CD8-positive, alpha-beta T cell (primary cell): ENCODE measurements at regions of chr12 and their contacts with region 1.

Region 1: GRCh38 chr12:85130632-85131031 is 94.5 kb downstream of the LRRIQ1 start:
- DNase-seq: no peak
- ATAC-seq: no peak
- H3K4me3 ChIP-seq: no peak overlapping the region
- H3K4me3 Mint-ChIP-seq: no peak overlapping the region
- H3K27ac ChIP-seq: no peak overlapping the region
- H3K27ac Mint-ChIP-seq: no peak overlapping the region
- H3K4me1 ChIP-seq: no peaks in the 10 kb centered on the region
- H3K4me1 Mint-ChIP-seq: no peaks in the 10 kb centered on the region
- H3K27me3 ChIP-seq: no peaks in the 10 kb centered on the region
- H3K27me3 Mint-ChIP-seq: no peaks in the 10 kb centered on the region
- CTCF ChIP-seq: no peak

Region 2: DNA sequence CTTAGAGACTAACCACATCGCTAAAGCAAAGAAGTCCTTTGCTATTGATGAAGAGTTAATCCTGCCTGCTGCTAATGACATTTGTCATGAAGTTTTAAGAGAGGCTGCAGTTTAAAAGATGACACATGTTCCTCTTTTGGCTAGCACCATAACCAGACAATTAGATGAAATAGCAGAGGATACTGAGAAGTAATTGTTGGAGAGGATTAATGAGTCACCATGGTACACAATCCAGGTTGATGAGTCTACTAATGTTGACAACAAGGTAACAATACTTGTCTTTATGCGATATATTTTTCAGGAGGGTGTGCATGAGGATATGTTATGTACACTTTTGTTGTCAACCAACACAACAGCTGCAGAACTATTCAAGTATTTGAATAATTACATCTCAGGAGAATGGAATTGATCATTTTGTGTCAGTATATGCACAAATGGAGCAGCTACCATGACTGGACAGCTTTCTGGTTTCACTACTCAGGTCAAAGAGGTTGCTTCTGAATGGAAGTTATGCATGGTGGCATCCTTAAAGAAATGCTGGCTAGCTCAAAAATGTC is 37.7 kb before region 1 on chr12:
- CTCF ChIA-PET with region 1: no interaction called
- POLR2A ChIA-PET with region 1: no interaction called
- intact Hi-C with region 1: loop called in 1 of 2 experiments (anchors 1 kb)
- DNase-seq: no peak
- ATAC-seq: no peak
- H3K4me3 ChIP-seq: no peak overlapping the region
- H3K4me3 Mint-ChIP-seq: no peak overlapping the region
- H3K27ac ChIP-seq: no peak overlapping the region
- H3K27ac Mint-ChIP-seq: no peak overlapping the region
- H3K4me1 ChIP-seq: no peaks in the 10 kb centered on the region
- H3K4me1 Mint-ChIP-seq: no peaks in the 10 kb centered on the region
- H3K27me3 ChIP-seq: no peaks in the 10 kb centered on the region
- H3K27me3 Mint-ChIP-seq: no peaks in the 10 kb centered on the region
- CTCF ChIP-seq: no peak

Region 3: DNA sequence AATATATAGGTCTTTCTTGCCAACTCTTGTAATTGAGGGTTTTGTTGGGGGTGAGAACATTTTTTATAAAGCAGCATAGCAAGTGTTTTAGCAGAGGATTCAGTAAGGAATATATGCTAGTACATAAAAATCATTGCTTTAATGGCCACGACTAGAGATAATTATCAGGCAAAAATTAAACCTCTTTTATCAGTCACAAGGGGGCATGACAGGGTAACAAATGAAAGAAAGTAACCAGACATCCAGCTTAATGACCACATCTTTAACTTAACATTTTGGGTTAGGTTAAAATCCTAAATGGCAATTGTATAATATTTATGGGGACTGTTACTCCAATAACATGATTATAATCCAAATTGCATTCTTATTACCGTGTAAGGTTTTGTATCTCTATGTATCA is 25.2 kb after region 1 on chr12:
- CTCF ChIA-PET with region 1: no interaction called
- POLR2A ChIA-PET with region 1: no interaction called
- intact Hi-C with region 1: no loop called
- DNase-seq: no peak
- ATAC-seq: no peak
- H3K4me3 ChIP-seq: no peak overlapping the region
- H3K4me3 Mint-ChIP-seq: no peak overlapping the region
- H3K27ac ChIP-seq: no peak overlapping the region
- H3K27ac Mint-ChIP-seq: no peak overlapping the region
- H3K4me1 ChIP-seq: no peaks in the 10 kb centered on the region
- H3K4me1 Mint-ChIP-seq: no peaks in the 10 kb centered on the region
- H3K27me3 ChIP-seq: no peaks in the 10 kb centered on the region
- H3K27me3 Mint-ChIP-seq: no peaks in the 10 kb centered on the region
- CTCF ChIP-seq: no peak

Region 4: GRCh38 chr12:85476756-85477155 is 346.1 kb after region 1 on chr12:
- CTCF ChIA-PET with region 1: no interaction called
- POLR2A ChIA-PET with region 1: no interaction called
- intact Hi-C with region 1: no loop called
- DNase-seq: no peak
- ATAC-seq: no peak
- H3K4me3 ChIP-seq: no peak overlapping the region
- H3K4me3 Mint-ChIP-seq: no peak overlapping the region
- H3K27ac ChIP-seq: no peak overlapping the region
- H3K27ac Mint-ChIP-seq: no peak overlapping the region
- H3K4me1 ChIP-seq: no peaks in the 10 kb centered on the region
- H3K4me1 Mint-ChIP-seq: no peaks in the 10 kb centered on the region
- H3K27me3 ChIP-seq: no peaks in the 10 kb centered on the region
- H3K27me3 Mint-ChIP-seq: no peaks in the 10 kb centered on the region
- CTCF ChIP-seq: no peak